ENCODE measurements at regions of chr4 and their contacts with region 1.

Region 1: DNA sequence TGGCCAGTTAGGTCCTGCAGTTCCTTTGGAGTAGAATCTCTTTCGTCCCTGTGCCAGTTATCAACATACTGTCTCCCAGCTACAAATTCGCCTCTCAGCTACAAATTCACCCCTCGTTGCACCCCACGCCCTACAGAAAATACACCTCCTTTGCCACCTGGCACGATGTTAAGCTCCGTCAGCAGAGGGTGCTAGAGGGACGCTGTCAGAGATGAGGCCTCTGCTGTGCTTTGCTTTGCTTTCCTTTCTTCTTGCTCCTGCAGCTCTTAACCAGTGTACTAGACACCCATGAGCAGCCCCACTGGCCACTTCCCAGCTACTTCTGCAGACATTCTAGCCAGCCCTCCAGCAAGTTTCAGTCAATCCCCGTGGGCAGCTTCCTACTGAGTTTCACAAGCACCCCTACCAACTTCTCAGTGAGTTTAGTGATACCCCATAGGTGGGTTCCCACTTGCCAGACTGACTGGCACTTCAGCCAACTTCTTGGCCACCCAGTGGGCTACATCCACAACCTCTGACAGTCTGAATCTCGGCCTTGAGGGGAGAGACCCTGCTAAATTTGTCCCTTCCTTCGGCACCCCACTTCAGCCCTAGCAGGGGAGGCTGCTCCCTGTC is 21.8 kb downstream of the HAUS3 start:
- DNase-seq: peak; percentile 53 to 83
- ATAC-seq: peak; percentile 85 to 98 (median 91)
- H3K4me3 ChIP-seq: no peak overlapping the region
- H3K27ac ChIP-seq: no peak overlapping the region
- H3K4me1 ChIP-seq: no peaks in the 10 kb centered on the region
- H3K27me3 ChIP-seq: no peaks in the 10 kb centered on the region
- CTCF ChIP-seq: peak; percentile 83

Region 2: GRCh38 chr4:2262143-2262943 is 42.2 kb after region 1 on chr4:
- intact Hi-C with region 1: no loop called
- DNase-seq: peak; percentile 100
- ATAC-seq: peak; percentile 92 to 95 (median 93)
- H3K4me3 ChIP-seq: peak overlapping the region; percentile 99
- H3K27ac ChIP-seq: peak overlapping the region; percentile 97
- H3K4me1 ChIP-seq: peaks cover 60% of the 10 kb centered on the region
- H3K27me3 ChIP-seq: no peaks in the 10 kb centered on the region
- CTCF ChIP-seq: no peak

Region 3: GRCh38 chr4:2433699-2434350 is 213.7 kb after region 1 on chr4:
- intact Hi-C with region 1: loop called in 1 of 2 experiments (anchors 2 kb)
- DNase-seq: peak in 1 of 2 donors; percentile 54
- ATAC-seq: peak; percentile 18 to 49 (median 33)
- H3K4me3 ChIP-seq: peak overlapping the region; percentile 22
- H3K27ac ChIP-seq: peak overlapping the region; percentile 74
- H3K4me1 ChIP-seq: peaks cover 24% of the 10 kb centered on the region
- H3K27me3 ChIP-seq: no peaks in the 10 kb centered on the region
- CTCF ChIP-seq: no peak

Region 4: DNA sequence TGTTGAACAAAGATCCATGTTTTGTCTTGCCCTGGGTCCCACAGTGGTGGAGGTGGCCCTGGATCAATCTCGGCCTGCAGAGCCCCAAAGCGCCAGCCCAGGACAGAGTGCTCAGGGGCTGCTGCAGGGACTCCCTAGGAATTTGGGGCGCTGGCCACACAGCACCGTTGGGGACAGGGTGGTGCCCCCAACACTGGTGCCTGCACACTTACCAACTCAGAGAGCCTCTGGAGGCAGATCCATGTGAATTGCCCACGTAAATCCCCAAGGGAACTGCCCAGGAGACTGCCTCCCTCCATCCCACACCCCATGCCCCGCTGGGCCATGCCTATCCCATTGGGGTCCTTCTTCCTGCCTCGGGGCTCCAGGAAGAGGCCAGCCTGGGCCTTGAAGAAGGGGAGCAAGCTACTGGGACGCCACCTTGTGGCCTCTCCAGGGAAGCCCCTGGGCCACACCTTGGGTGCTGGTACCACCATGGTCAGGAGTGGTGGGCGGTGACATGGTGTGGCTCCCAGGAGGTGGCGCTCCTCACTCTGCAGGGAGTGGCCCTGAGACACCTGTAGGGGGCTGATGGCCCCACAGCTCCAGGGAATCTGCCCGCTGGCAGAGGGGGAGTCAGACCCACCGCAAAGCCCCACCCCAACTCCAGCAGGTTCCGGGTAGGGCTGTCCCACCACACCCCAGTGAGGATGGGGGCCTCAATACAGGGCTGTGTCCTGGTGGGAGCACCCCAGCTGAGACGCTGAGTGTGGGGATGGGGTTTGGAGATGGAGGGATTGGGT is 221.5 kb after region 1 on chr4:
- intact Hi-C with region 1: loop called (anchors 2 to 5 kb)
- DNase-seq: peak; percentile 50 to 63
- ATAC-seq: peak; percentile 67 to 90 (median 82)
- H3K4me3 ChIP-seq: no peak overlapping the region
- H3K27ac ChIP-seq: no peak overlapping the region
- H3K4me1 ChIP-seq: no peaks in the 10 kb centered on the region
- H3K27me3 ChIP-seq: no peaks in the 10 kb centered on the region
- CTCF ChIP-seq: peak; percentile 66

Region 5: GRCh38 chr4:2462218-2462991 is 242.3 kb after region 1 on chr4:
- intact Hi-C with region 1: loop called (anchors 2 to 5 kb)
- DNase-seq: peak; percentile 73 to 81
- ATAC-seq: peak; percentile 92 to 96 (median 94)
- H3K4me3 ChIP-seq: peak overlapping the region; percentile 75
- H3K27ac ChIP-seq: peak overlapping the region; percentile 43
- H3K4me1 ChIP-seq: peaks cover 4% of the 10 kb centered on the region
- H3K27me3 ChIP-seq: no peaks in the 10 kb centered on the region
- CTCF ChIP-seq: peak; percentile 69

Measured in psoas muscle (tissue), 8 donors.